GM10248 (cell line): ENCODE measurements at regions of chr17 and their contacts with region 1.

Region 1: DNA sequence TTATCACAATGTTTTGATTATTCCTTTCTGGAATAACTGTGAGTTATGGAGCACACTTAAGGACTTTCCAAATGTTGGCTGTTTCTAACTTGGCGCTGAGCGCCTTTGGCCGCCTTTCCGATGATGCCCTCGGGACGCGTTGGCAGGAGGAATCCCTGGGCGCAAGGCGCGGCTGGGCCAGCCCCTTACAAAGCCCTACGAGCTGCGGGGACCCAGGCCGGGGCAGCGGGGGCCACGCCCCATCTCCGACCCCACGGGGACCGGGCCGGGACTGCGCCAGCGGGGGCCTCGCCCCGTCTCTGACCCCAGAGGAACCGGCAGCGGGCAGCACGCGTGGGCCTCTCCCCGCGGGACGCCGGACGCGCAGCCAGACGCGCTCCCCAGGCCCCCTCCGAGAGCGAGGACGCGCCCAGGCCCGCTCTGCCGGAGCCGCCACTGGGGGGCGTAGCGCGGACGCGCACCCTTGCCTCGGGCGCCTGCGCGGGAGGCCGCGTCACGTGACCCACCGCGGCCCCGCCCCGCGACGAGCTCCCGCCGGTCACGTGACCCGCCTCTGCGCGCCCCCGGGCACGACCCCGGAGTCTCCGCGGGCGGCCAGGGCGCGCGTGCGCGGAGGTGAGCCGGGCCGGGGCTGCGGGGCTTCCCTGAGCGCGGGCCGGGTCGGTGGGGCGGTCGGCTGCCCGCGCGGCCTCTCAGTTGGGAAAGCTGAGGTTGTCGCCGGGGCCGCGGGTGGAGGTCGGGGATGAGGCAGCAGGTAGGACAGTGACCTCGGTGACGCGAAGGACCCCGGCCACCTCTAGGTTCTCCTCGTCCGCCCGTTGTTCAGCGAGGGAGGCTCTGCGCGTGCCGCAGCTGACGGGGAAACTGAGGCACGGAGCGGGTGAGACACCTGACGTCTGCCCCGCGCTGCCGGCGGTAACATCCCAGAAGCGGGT is at the start of gene GAA:
- DNase-seq: peak; percentile 99
- CTCF ChIP-seq: peak; percentile 93

Region 2: GRCh38 chr17:80082403-80083135 is 18.7 kb before region 1 on chr17:
- CTCF ChIA-PET with region 1: interaction called, 25 read pairs
- POLR2A ChIA-PET with region 1: no interaction called
- DNase-seq: peak; percentile 84
- CTCF ChIP-seq: peak; percentile 76

Region 3: GRCh38 chr17:80111327-80112014 is 10.2 kb after region 1 on chr17:
- CTCF ChIA-PET with region 1: interaction called, 16 read pairs
- POLR2A ChIA-PET with region 1: no interaction called
- DNase-seq: no peak
- CTCF ChIP-seq: no peak

Region 4: DNA sequence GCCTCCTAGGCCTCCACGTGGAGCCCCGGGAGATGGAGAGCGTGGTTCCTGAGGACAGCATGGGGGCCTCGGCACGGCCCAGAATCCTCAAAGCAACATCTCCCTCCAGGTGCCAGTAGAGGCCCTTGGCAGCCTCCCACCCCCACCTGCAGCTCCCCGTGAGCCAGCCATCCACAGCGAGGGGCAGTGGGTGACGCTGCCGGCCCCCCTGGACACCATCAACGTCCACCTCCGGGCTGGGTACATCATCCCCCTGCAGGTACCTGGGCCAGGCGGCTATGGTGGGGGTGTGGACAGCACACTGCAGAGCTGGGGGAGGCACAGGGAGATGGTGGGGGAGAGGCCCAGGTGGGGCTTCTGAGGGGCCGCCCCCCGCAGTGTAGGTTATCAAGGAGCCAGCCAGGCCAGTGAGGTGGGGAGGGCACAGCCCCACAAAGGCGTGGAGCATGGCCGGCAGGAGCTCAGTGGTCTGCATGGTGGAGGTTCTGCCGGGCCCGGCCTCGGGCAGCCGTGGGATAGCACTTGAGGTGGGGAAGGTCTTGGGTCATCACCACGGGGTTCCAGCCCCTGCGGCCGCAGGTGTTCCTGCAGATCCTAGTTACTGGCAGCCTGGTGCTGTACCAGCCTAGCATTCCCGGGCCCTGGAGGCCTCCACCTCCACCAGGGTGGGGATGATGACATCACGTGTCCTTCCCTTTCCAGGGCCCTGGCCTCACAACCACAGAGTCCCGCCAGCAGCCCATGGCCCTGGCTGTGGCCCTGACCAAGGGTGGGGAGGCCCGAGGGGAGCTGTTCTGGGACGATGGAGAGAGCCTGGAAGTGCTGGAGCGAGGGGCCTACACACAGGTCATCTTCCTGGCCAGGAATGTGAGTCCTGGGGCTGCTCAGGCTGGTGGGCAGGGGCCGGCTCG is 16.5 kb after region 1 on chr17:
- CTCF ChIA-PET with region 1: interaction called, 16 read pairs
- POLR2A ChIA-PET with region 1: no interaction called
- DNase-seq: no peak
- CTCF ChIP-seq: no peak

Region 5: GRCh38 chr17:80147035-80147836 is 46.0 kb after region 1 on chr17 and contains the start of gene EIF4A3:
- CTCF ChIA-PET with region 1: interaction called, 8 read pairs
- POLR2A ChIA-PET with region 1: interaction called, 16 read pairs
- DNase-seq: peak; percentile 99
- CTCF ChIP-seq: peak; percentile 14

Region 6: GRCh38 chr17:80152081-80152990 is 51.1 kb after region 1 on chr17:
- CTCF ChIA-PET with region 1: interaction called, 10 read pairs
- POLR2A ChIA-PET with region 1: no interaction called
- DNase-seq: no peak
- CTCF ChIP-seq: no peak

Region 7: GRCh38 chr17:80406146-80406545 is 304.9 kb after region 1 on chr17:
- CTCF ChIA-PET with region 1: no interaction called
- POLR2A ChIA-PET with region 1: no interaction called
- DNase-seq: no peak
- CTCF ChIP-seq: no peak